ENCODE measurements at regions of chr17 and their contacts with region 1.

Region 1: GRCh38 chr17:21126645-21127510 is at the start of gene DHRS7B:
- DNase-seq: peak; percentile 97
- H3K4me3 ChIP-seq: peak within 1 kb of the TSS; percentile 67 to 72
- H3K27ac ChIP-seq: peak within 1 kb of the TSS; percentile 91 to 93
- H3K4me1 ChIP-seq: no peaks in the 10 kb centered on the region
- H3K27me3 ChIP-seq: no peaks in the 10 kb centered on the region
- CTCF ChIP-seq: peak in 1 of 4 experiments; percentile 14
- POLR2A ChIP-seq: peak; percentile 84
- total RNA-seq, gene DHRS7B: 52.1 to 67.5 TPM

Region 2: GRCh38 chr17:21043286-21044232 is 83.3 kb before region 1 on chr17:
- intact Hi-C with region 1: loop called (anchors 5 kb)
- DNase-seq: peak; percentile 98
- H3K4me3 ChIP-seq: peak overlapping the region; percentile 52 to 71
- H3K27ac ChIP-seq: peak overlapping the region; percentile 93 to 100
- H3K4me1 ChIP-seq: no peaks in the 10 kb centered on the region
- H3K27me3 ChIP-seq: no peaks in the 10 kb centered on the region
- CTCF ChIP-seq: peak; percentile 80 to 96 (median 94)
- POLR2A ChIP-seq: peak; percentile 74

Region 3: DNA sequence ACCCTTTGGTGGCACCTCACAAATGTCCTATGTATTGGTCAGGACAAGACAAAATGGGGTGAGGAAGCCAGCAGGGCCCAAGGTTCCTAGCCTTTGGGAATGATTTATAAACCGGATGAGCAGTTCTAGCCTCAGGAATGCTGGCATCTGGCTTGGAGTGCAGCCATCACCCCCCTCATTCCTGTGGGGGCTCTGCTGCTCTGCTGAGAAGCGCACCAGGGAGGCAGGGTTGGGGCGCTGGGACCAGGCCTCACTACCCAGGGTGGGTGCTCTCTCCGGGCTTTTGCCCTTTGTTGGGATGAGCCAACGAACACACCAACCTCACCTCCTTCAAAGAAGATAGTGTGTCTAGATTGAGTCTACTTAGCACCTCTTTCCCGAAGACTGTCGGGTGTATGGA is 47.8 kb after region 1 on chr17:
- intact Hi-C with region 1: no loop called
- DNase-seq: no peak
- H3K4me3 ChIP-seq: no peak overlapping the region
- H3K27ac ChIP-seq: peak overlapping the region; percentile 2 to 9
- H3K4me1 ChIP-seq: no peaks in the 10 kb centered on the region
- H3K27me3 ChIP-seq: no peaks in the 10 kb centered on the region
- CTCF ChIP-seq: no peak
- POLR2A ChIP-seq: no peak

Region 4: GRCh38 chr17:21214015-21214776 is 87.3 kb after region 1 on chr17 and contains the start of gene TMEM11:
- intact Hi-C with region 1: loop called (anchors 2 kb)
- DNase-seq: peak; percentile 94
- H3K4me3 ChIP-seq: peak within 1 kb of the TSS; percentile 74 to 93
- H3K27ac ChIP-seq: peak within 1 kb of the TSS; percentile 91 to 93
- H3K4me1 ChIP-seq: peaks cover 37% of the 10 kb centered on the region
- H3K27me3 ChIP-seq: no peaks in the 10 kb centered on the region
- CTCF ChIP-seq: peak in 2 of 4 experiments; percentile 15 to 26
- POLR2A ChIP-seq: peak; percentile 74
- total RNA-seq, gene TMEM11: 33.1 to 44.1 TPM

Region 5: GRCh38 chr17:21239680-21240368 is 112.9 kb after region 1 on chr17:
- intact Hi-C with region 1: loop called (anchors 10 kb)
- DNase-seq: no peak
- H3K4me3 ChIP-seq: no peak overlapping the region
- H3K27ac ChIP-seq: no peak overlapping the region
- H3K4me1 ChIP-seq: no peaks in the 10 kb centered on the region
- H3K27me3 ChIP-seq: no peaks in the 10 kb centered on the region
- CTCF ChIP-seq: peak in 2 of 4 experiments; percentile 29 to 40
- POLR2A ChIP-seq: no peak

Region 6: GRCh38 chr17:21275579-21276263 is 148.8 kb after region 1 on chr17:
- intact Hi-C with region 1: loop called (anchors 5 kb)
- DNase-seq: peak; percentile 92
- H3K4me3 ChIP-seq: peak overlapping the region; percentile 52
- H3K27ac ChIP-seq: peak overlapping the region; percentile 25 to 60
- H3K4me1 ChIP-seq: peaks cover 5% of the 10 kb centered on the region
- H3K27me3 ChIP-seq: no peaks in the 10 kb centered on the region
- CTCF ChIP-seq: peak in 1 of 4 experiments; percentile 23
- POLR2A ChIP-seq: peak; percentile 67

Region 7: DNA sequence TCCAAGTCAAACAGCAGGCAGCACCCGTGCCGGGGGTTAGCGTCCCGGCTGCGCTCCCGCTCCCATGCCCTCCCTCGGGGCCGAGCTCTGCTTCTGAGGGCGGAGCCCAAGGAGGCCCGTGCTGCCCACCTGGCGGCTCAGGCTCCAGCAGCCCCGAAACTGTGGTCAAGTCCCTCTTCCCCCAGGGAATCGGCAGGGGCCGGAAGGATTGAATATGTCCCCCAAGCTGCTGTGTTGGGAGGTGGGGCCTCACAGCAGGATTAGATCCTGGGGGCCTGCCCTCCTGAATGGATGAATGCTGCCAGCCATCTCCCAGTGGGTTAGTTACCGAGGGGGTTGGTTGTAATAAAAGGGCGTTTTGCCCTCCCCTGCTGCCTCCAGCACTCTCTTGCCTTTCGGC is 191.6 kb after region 1 on chr17:
- intact Hi-C with region 1: no loop called
- DNase-seq: no peak
- H3K4me3 ChIP-seq: no peak overlapping the region
- H3K27ac ChIP-seq: no peak overlapping the region
- H3K4me1 ChIP-seq: no peaks in the 10 kb centered on the region
- H3K27me3 ChIP-seq: no peaks in the 10 kb centered on the region
- CTCF ChIP-seq: no peak
- POLR2A ChIP-seq: no peak

Region 8: DNA sequence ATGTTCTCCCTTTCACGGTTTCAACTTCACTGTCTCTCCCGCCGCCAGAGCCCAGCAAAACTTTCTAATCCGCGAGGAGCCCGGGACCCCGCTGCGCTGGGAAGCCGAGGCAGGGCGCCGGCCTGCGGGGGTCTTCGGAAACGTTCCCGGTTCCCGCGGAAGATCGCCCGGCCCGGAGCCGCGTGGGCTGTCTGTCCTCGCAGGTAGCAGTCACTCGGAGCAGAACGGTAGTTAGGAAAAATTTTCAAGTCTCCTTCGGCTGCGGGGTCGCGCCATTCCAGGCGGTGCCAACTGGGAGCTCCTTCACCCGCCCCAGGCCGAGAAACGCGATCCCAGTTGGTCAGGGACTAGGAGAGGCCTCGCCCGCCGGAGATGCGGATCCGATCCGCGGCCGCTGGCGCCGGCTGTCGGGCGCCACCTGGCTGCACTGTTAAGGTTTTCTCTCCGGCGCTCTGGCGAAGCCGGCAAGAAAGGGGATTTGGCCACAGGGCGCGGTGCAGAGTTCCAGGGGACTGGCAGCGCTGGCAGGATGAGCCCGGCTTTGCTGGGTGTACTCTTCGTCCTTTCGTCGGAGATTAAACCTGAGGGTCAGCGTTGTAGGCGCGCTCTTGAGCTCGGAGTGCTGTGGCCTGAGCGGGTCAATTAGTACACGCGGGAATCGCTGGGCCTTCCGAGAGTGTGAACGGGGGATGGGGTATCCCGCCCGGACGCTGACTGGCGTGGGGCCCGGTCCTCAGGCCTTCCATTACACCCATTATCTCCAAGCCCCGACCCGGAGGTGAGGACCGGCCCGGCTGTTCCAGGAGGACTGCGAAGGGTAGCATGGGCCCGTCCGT is 384.7 kb after region 1 on chr17:
- intact Hi-C with region 1: loop called (anchors 5 kb)
- DNase-seq: peak; percentile 69
- H3K4me3 ChIP-seq: peak overlapping the region; percentile 30
- H3K27ac ChIP-seq: peak overlapping the region; percentile 10 to 47
- H3K4me1 ChIP-seq: no peaks in the 10 kb centered on the region
- H3K27me3 ChIP-seq: no peaks in the 10 kb centered on the region
- CTCF ChIP-seq: peak; percentile 67 to 71 (median 68)
- POLR2A ChIP-seq: no peak